SK-N-SH (cell line): ENCODE measurements at regions of chr1 and their contacts with region 1.

Region 1: DNA sequence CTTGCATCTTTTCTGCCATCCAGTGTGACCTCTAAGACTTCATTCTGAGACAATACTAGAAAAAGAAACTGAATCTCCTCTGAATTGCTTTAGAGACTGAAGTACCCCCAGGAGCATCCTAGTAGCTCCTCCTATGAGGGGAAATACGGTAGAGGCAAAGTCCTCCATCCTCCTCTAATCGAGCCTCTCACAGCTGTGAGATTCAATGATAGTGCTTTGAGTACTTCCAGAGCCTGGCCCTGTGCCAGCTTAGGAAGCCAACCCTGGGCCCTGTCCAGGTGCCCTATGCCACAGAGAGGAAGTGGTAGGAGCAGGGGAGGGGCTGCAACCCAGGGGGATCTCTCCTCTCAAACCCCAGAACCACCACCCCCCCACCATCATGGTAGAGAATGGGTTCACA is 10.7 kb downstream of the RORC start:
- DNase-seq: peak; percentile 89
- H3K4me3 ChIP-seq: no peak overlapping the region
- H3K27ac ChIP-seq: peak overlapping the region in 1 of 2 experiments; percentile 81; a peak in 2 of 4 replicates
- H3K4me1 ChIP-seq: peaks cover 0 to 58% of the 10 kb centered on the region in 2 experiments; a peak in 2 of 4 replicates
- H3K27me3 ChIP-seq: peaks cover 2% of the 10 kb centered on the region; the same call in 1 of the 2 replicates
- CTCF ChIP-seq: no peak
- EP300 ChIP-seq: peak in 1 of 2 experiments; percentile 94; a peak in 2 of 4 replicates
- RAD21 ChIP-seq: peak; percentile 34

Region 2: GRCh38 chr1:151728151-151729054 is 92.5 kb before region 1 on chr1:
- CTCF ChIA-PET with region 1: interaction called, 11 read pairs
- POLR2A ChIA-PET with region 1: interaction called, 23 read pairs
- DNase-seq: peak; percentile 77
- H3K4me3 ChIP-seq: peak overlapping the region in 1 of 2 experiments; percentile 6; a peak in 1 of 4 replicates
- H3K27ac ChIP-seq: peak overlapping the region in 1 of 2 experiments; percentile 78; a peak in 2 of 4 replicates
- H3K4me1 ChIP-seq: peaks cover 0 to 26% of the 10 kb centered on the region in 2 experiments; a peak in 2 of 4 replicates
- H3K27me3 ChIP-seq: no peaks in the 10 kb centered on the region
- CTCF ChIP-seq: no peak
- EP300 ChIP-seq: 0 out of 4 replicates have a peak, but pooled peaks of 1 of the 2 experiments have one; percentile 46
- RAD21 ChIP-seq: peak; percentile 17; the same call in 1 of the 2 replicates

Region 3: DNA sequence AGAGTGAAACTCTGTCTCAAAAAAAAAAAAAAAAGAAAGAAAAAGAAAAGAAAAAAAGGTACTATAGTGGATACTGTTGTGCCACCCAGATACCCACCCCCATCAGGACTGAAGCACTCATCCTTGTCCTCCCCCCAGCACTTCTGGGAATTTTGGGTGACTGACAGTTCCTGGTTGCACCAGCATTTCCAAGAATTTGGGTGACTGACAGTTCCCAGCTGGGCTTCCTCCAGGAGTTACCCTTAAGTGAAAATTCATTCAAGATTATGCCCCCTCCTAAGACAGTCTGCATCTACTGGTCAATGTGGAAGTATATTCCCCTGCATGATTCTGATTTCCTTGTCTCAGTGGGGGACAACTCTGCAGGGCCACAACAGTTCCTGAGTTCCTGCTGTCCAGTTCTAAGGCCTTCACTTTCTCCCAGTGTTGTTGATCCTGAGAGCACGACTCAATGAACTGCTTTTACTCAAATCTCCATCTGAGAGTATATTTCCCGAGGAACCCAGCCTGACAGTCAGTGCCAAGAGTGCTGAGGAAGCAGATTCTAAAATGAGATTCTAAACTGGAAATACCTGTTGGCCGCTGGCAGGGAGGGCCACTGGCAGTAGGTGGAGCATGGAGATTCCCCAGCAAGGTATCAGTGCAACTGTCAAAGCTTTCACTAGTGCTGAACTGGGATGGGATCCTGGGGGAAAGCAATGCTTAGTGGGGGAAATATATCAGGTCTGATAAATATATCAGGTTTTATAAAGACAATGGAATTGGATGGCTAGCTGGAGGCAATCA is 81.2 kb before region 1 on chr1:
- CTCF ChIA-PET with region 1: interaction called, 13 read pairs
- POLR2A ChIA-PET with region 1: no interaction called
- DNase-seq: no peak
- H3K4me3 ChIP-seq: 0 out of 4 replicates have a peak overlapping the region, but pooled peaks of 1 of the 2 experiments have one; percentile 7
- H3K27ac ChIP-seq: no peak overlapping the region
- H3K4me1 ChIP-seq: peaks cover 0 to 2% of the 10 kb centered on the region in 2 experiments; a peak in 1 of 4 replicates
- H3K27me3 ChIP-seq: peaks cover 25% of the 10 kb centered on the region; the same call in 1 of the 2 replicates
- CTCF ChIP-seq: no peak
- EP300 ChIP-seq: no peak
- RAD21 ChIP-seq: no peak